Activated CD4-positive, alpha-beta memory T cell treated with anti-CD3 and anti-CD28 coated beads, Interleukin-2, amount 10 ng/mL, durations not matched to agents 7 days and 5 days (primary cell): ENCODE measurements at regions of chr16 and their contacts with region 1.

Region 1: DNA sequence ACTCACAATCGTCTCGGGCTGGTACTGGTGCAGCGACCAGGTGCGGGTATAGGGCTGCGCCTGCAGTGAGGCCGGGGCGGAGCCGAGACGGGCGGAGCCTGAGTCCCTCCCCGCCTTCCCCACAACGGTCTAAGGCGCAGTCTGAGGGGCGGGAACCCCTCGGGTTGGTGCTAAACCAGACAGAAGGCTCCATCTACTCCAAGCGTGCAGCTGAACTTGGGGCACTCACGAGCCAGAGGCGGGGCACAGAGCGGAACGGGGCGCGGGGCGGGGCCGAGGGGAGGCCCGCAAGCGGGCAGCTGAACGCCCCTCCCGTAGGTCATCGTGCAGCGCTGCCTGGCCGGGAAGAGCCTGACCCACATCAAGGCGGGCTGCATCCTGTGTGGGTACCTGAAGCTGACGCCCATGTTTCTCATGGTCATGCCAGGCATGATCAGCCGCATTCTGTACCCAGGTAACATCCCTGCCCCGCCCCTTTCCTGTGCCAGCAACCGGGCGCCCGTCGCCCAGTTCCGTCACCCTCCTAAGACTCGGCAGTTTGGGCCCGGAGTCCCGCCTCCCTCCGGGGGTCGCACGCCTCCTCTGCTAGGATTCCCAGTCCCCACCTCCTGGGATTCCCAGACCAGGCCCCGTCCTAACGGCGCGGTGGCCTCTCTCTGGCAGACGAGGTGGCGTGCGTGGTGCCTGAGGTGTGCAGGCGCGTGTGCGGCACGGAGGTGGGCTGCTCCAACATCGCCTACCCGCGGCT is 5.0 kb downstream of the SLC5A2 start:
- DNase-seq: peak; percentile 66
- H3K4me3 Mint-ChIP-seq: peak overlapping the region; percentile 80
- H3K27ac Mint-ChIP-seq: no peak overlapping the region
- H3K4me1 Mint-ChIP-seq: peaks cover 12% of the 10 kb centered on the region
- H3K27me3 Mint-ChIP-seq: peaks cover 7% of the 10 kb centered on the region

Region 2: GRCh38 chr16:31441956-31442355 is 45.9 kb before region 1 on chr16:
- CTCF ChIA-PET with region 1: no interaction called
- POLR2A ChIA-PET with region 1: no interaction called
- DNase-seq: no peak
- H3K4me3 Mint-ChIP-seq: peak overlapping the region; percentile 73
- H3K27ac Mint-ChIP-seq: no peak overlapping the region
- H3K4me1 Mint-ChIP-seq: peaks cover 29% of the 10 kb centered on the region
- H3K27me3 Mint-ChIP-seq: no peaks in the 10 kb centered on the region

Region 3: DNA sequence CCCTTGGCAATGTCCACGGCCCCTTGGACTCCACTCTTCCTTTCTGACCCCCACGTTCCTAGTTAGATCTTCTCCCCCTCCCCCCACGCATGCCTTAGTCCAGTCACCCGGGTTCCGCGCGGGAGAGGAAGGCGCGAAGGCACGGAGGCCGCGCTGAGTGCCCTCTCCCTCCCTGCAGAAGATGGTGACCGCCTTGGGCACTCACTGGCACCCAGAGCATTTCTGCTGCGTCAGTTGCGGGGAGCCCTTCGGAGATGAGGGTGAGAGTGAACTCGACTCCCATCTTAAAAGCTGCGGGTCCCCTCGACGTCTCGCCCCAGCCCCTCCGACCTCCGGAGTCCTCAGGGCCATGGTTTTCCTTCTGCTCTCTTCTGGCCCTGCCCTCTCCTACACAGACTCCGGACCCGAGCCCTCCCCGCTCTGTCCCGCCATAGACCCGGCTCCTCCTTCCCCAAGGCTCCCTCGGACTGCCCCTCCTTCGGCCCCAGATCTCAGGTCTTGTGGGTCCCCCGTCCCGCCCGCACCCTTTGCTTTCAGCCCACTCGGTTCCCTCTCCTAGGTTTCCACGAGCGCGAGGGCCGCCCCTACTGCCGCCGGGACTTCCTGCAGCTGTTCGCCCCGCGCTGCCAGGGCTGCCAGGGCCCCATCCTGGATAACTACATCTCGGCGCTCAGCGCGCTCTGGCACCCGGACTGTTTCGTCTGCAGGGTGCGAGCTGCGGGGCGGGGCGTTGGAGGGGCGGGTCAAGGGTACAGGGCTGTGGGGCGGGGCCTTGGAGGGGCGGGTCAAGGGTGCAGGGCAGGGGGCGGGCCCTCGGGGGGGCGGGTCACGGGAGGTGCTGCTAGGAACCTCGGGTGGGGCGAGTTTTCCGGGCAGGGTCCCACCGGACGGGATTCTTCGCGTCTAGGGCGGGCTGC is 11.3 kb before region 1 on chr16:
- CTCF ChIA-PET with region 1: no interaction called
- POLR2A ChIA-PET with region 1: interaction called, 19 read pairs
- DNase-seq: peak; percentile 92
- H3K4me3 Mint-ChIP-seq: peak overlapping the region; percentile 78
- H3K27ac Mint-ChIP-seq: peak overlapping the region; percentile 47
- H3K4me1 Mint-ChIP-seq: peaks cover 24% of the 10 kb centered on the region
- H3K27me3 Mint-ChIP-seq: peaks cover 43% of the 10 kb centered on the region